GM10248 (cell line): ENCODE measurements at regions of chr1 and their contacts with region 1.

Region 1: DNA sequence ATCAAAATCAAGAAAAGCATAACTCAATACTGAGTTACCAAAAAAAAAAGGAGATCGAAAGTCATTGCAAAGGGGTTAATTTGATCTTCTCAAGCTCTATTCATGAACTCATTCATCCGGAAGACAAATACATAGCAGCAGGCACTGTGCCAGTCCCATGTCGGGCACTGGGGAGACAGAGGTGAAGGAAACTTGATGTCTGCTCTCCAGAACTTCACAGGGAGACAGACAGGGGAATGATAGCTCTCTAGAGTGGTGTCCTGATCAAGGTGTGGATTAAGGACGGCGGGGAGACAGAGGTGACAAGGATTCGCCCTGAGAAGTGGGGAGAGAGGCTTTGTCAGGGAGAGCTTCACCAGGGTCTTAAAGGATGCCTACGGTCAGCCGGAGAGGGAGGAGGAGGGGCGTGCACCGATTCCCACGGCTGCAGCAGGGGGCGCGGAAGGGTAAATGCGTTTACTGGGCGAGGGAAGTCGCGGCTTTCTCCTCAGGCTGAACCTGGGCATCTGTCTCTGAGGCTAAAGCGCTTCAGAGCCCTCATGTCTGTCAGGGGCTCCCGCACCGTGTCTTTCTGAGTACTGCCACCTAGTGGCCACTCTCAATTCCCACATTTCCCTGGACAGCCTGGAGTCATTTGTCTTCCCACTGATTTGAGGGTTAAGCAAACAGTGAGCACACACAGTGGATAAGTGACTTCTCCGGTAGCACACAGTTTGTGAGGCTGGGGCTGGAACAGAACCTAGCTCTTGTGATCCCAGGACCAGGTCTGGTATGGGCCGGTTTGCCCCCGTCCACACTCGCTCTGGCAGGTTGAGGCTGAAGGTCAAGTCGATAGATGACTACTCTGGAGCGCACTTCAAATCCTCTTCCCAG is 152.8 kb downstream of the TENT5C start:
- DNase-seq: peak; percentile 75
- CTCF ChIP-seq: peak; percentile 75

Region 2: GRCh38 chr1:117501281-117501680 is 257.4 kb before region 1 on chr1:
- CTCF ChIA-PET with region 1: interaction called, 10 read pairs
- POLR2A ChIA-PET with region 1: no interaction called
- DNase-seq: no peak
- CTCF ChIP-seq: no peak

Region 3: GRCh38 chr1:117527566-117528102 is 231.0 kb before region 1 on chr1:
- CTCF ChIA-PET with region 1: interaction called, 72 read pairs
- POLR2A ChIA-PET with region 1: no interaction called
- DNase-seq: no peak
- CTCF ChIP-seq: no peak

Region 4: DNA sequence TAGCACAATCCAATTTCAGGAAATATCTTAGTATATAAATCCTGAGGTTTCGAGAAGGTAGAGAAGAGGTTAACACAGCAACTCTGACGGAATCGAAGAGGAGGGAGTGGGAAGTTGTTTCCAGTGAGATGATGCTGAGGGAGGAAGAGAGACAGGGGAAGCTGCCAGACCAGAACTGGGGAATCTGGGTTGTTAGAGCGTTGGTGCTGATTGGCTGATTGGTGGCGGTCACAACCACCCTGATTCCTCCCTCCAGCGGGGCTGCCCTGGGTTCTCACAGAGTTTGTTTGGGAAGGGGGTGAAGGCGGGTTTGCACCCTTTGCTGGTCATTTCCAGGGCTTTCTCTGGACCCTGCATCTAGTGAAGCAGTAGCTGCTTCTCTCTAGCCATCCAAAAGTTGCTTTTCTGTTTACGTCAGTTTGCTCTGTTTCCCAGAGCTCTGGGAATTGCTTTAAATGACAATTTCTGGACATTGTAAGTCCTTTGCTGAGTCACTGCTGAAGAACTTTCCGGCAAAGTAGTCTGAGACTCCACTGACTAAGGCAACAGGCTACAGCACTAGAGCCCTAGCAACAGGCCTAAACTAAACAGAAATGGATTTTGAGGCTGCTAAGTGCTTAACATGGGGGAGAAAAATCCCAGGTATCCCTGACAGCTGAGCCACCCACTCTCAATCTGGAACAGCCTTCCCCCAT is 62.7 kb before region 1 on chr1:
- CTCF ChIA-PET with region 1: interaction called, 11 read pairs
- POLR2A ChIA-PET with region 1: no interaction called
- DNase-seq: no peak
- CTCF ChIP-seq: no peak

Region 5: GRCh38 chr1:117735045-117735992 is 23.4 kb before region 1 on chr1:
- CTCF ChIA-PET with region 1: interaction called, 18 read pairs
- POLR2A ChIA-PET with region 1: no interaction called
- DNase-seq: peak; percentile 42
- CTCF ChIP-seq: no peak

Region 6: DNA sequence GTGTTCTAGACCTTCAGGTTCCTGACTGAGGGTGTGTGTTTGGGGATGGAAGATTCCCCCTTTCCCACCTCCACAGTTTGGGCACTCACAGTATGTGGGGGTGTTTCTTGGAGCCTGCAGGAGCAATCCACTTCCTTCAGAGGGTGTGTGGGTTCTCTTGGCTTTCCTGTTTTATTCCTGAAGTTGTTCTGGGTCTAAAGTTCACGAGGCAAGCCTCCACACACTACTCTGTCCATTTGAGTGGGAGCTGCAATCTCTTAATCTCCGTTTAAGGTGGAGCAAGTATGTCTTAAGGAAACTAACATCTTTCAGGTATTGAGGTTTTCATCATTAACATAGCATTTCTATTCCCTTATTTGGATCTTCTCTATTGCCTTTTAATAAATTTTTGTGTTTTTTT is 11.1 kb before region 1 on chr1:
- CTCF ChIA-PET with region 1: interaction called, 18 read pairs
- POLR2A ChIA-PET with region 1: no interaction called
- DNase-seq: no peak
- CTCF ChIP-seq: no peak

Region 7: DNA sequence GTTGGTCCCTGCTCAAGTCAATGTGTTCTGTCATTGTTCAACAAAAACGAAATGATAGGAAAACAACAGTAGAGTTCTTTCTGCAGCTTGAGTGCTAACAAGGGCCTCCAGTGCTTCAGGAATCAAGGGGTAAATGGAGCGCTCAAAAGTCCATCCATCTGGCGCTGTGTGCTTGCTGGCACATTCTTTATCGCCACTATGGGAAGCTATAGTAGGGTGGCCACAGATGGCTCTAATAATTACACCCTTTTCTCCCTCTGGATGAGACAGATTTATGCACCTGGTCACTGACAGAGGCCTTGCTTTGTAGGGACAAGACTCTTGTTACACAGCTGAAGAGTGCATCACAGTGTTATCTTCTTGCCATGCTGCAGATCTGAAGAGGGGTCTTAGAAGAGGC is 34.7 kb after region 1 on chr1:
- CTCF ChIA-PET with region 1: interaction called, 12 read pairs
- POLR2A ChIA-PET with region 1: no interaction called
- DNase-seq: no peak
- CTCF ChIP-seq: no peak